ENCODE measurements at regions of chr1 and their contacts with region 1.

Region 1: GRCh38 chr1:110619412-110620249 is 13.5 kb upstream of the KCNA2 start:
- DNase-seq: peak; percentile 89 to 95 (median 90)
- H3K4me3 ChIP-seq: peak overlapping the region in 2 of 3 donors; percentile 11 to 21
- H3K27ac ChIP-seq: peak overlapping the region in 1 of 2 donors; percentile 23
- H3K4me1 ChIP-seq: peaks cover 0 to 6% (median 0%) of the 10 kb centered on the region in 3 donors
- H3K27me3 ChIP-seq: peaks cover 15% of the 10 kb centered on the region
- CTCF ChIP-seq: peak; percentile 89

Region 2: DNA sequence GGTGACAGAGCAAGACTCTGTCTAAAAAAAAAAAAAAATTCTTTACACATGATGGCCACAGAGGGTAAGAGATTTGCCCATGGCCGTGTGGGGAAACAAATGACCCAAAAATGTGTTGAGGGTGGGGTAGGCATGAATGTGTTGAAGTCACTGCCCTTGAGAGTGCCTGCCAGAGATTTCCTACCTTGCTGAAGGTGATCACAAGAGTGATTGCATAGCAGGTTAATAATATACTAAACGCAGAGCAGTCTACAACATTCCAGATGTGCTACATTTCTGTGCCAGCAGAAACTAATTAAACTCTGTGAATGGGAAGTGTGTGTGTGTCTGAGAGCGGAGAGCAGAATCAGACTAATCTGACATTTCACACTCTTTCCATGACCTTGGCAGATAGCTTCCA is 160.0 kb after region 1 on chr1:
- intact Hi-C with region 1: loop called (anchors 5 kb)
- DNase-seq: peak in 2 of 5 donors; percentile 7 to 23
- H3K4me3 ChIP-seq: no peak overlapping the region
- H3K27ac ChIP-seq: peak overlapping the region in 1 of 2 donors; percentile 67
- H3K4me1 ChIP-seq: peaks cover 0 to 8% (median 0%) of the 10 kb centered on the region in 3 donors
- H3K27me3 ChIP-seq: no peaks in the 10 kb centered on the region
- CTCF ChIP-seq: no peak